Activated naive CD4-positive, alpha-beta T cell treated with anti-CD3 and anti-CD28 coated beads for 36 hours (primary cell): ENCODE measurements at regions of chr12 and their contacts with region 1.

Region 1: DNA sequence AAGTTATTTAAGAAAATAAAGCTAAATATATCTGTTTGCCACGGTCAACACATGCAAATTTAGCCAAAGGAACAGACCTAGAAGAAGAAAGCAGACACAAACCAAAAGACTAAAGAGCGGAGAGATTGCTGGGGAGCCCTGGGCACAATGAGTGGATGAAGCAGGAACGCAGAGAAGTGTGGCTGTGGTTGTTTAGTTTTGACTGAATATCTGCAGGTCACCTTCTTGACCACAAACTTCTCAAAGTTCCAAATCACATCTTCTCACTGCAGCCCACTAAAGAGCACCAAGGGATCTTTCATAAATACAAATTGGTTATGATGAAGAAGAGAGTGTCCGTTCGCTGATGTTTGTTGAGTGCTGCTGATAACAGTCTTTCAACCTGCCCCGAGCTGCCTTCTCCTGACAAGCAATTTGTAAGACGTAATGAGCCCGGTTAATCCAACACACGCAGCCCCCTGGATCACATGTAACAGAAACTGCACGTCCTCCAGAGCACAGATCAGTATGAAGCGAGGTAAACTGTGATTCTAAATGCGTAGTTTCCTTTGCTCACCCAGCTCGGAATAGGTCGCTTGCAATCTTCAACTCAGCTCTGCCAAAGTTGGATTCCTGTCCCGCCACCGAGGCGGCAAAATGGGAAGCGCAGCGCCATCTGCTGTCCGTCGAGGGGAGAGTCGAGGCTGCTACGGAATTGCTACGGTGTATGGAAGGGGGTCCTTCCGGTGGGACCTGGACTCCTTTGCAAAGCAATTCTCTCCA is 120.8 kb downstream of the GXYLT1 start:
- DNase-seq: peak; percentile 80
- H3K4me3 Mint-ChIP-seq: peak overlapping the region; percentile 51
- H3K27ac Mint-ChIP-seq: no peak overlapping the region
- H3K4me1 Mint-ChIP-seq: peaks cover 8% of the 10 kb centered on the region
- H3K27me3 Mint-ChIP-seq: peaks cover 7% of the 10 kb centered on the region

Region 2: GRCh38 chr12:41277116-41277945 is 746.6 kb before region 1 on chr12:
- CTCF ChIA-PET with region 1: interaction called, 7 read pairs
- intact Hi-C with region 1: loop called (anchors 1 kb)
- DNase-seq: peak; percentile 28
- H3K4me3 Mint-ChIP-seq: no peak overlapping the region
- H3K27ac Mint-ChIP-seq: no peak overlapping the region
- H3K4me1 Mint-ChIP-seq: no peaks in the 10 kb centered on the region
- H3K27me3 Mint-ChIP-seq: no peaks in the 10 kb centered on the region

Region 3: DNA sequence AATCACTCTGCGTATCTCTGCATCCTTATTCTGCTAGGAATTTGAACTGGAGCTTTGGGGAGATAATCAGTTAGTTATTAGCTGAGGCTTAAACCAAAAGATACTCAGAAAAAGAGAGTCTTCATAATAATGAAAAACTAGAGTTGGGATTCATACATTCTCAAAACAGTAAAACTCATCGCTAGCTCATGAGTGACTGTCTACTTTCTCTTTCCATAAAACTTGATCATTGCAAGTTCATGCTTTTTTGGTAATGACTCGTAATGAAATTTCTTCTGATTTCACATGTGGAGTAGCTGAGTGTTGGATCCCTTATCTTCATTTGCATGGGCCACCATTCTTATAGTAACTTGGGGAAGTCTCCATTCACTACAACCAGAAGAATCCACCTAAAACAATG is 438.1 kb before region 1 on chr12:
- CTCF ChIA-PET with region 1: no interaction called
- intact Hi-C with region 1: loop called (anchors 10 kb)
- DNase-seq: no peak
- H3K4me3 Mint-ChIP-seq: no peak overlapping the region
- H3K27ac Mint-ChIP-seq: no peak overlapping the region
- H3K4me1 Mint-ChIP-seq: peaks cover 2% of the 10 kb centered on the region
- H3K27me3 Mint-ChIP-seq: peaks cover 2% of the 10 kb centered on the region

Region 4: GRCh38 chr12:41932470-41932991 is 91.4 kb before region 1 on chr12:
- CTCF ChIA-PET with region 1: interaction called, 4 read pairs
- intact Hi-C with region 1: loop called (anchors 5 kb)
- DNase-seq: peak; percentile 10
- H3K4me3 Mint-ChIP-seq: peak overlapping the region; percentile 71
- H3K27ac Mint-ChIP-seq: no peak overlapping the region
- H3K4me1 Mint-ChIP-seq: peaks cover 16% of the 10 kb centered on the region
- H3K27me3 Mint-ChIP-seq: peaks cover 53% of the 10 kb centered on the region

Region 5: DNA sequence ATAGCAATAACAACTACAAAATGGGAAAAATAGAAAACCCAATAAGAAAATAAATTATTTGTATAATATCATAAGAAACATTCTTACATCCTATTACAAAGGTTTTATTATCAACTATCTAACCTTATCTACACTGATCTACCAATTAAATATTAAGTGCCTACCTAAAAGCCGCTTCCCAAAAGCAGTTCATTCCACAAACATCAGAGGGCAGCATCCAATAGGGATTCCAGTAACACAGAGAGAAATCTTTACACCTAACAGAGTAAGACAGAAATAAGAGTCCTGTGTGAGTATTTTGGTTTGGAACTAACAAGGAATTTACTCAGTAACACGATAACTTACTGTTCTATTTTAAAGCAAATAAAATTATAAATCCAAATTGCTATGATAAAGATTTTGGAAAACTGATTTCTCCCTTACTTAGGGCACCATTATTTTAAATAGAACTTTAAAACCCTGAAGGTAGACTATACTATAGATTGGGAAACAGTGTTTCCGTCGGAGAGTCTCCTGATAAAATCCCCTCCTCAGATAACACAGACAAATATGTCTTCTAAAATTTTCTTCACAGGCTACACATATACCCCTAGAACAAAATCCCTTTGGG is 105.8 kb after region 1 on chr12:
- CTCF ChIA-PET with region 1: no interaction called
- intact Hi-C with region 1: no loop called
- DNase-seq: peak; percentile 42
- H3K4me3 Mint-ChIP-seq: no peak overlapping the region
- H3K27ac Mint-ChIP-seq: no peak overlapping the region
- H3K4me1 Mint-ChIP-seq: peaks cover 41% of the 10 kb centered on the region
- H3K27me3 Mint-ChIP-seq: no peaks in the 10 kb centered on the region

Region 6: DNA sequence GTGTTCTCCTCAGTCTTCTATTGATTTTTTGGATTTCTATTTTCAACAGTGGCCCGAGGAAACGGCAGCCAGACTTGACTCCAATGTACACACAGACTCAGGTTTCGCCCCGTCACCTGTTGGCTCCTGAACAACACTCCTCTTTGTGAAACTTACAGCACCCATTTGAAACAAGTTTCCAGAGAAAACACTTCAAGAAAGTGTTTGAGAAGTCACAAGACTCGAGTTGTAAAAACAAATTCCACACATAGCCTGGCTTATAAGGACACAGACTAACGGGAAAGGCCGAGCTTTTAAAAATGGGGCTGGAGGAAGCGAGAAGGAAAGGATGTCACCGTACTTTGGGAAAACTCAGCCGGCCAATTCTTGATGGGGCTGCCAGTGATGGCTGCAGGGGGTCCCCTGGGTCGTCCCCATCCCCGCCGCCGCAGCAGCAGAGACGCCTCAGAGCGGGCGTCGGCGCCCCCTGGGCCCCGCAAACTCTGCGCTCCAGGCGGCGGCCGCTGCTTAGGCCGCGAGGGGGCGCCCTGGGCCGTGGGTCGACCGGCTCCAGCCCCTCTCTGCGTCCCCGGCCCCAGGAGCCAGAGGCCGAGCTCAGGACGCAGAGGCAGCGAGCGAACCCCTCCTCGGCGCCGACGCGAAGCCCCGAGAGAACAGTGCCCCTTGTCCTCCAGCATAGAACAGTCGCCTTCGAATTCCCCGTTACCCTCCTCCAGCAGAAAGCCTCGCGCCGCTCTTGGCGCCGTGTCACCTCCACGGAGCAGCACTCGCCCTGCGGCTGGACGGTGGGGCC is 458.7 kb after region 1 on chr12:
- CTCF ChIA-PET with region 1: interaction called, 5 read pairs
- intact Hi-C with region 1: loop called (anchors 5 kb)
- DNase-seq: peak; percentile 52
- H3K4me3 Mint-ChIP-seq: peak overlapping the region; percentile 71
- H3K27ac Mint-ChIP-seq: no peak overlapping the region
- H3K4me1 Mint-ChIP-seq: peaks cover 7% of the 10 kb centered on the region
- H3K27me3 Mint-ChIP-seq: peaks cover 67% of the 10 kb centered on the region